HepG2 (cell line): ENCODE measurements at regions of chr1 and their contacts with region 1.

Region 1: DNA sequence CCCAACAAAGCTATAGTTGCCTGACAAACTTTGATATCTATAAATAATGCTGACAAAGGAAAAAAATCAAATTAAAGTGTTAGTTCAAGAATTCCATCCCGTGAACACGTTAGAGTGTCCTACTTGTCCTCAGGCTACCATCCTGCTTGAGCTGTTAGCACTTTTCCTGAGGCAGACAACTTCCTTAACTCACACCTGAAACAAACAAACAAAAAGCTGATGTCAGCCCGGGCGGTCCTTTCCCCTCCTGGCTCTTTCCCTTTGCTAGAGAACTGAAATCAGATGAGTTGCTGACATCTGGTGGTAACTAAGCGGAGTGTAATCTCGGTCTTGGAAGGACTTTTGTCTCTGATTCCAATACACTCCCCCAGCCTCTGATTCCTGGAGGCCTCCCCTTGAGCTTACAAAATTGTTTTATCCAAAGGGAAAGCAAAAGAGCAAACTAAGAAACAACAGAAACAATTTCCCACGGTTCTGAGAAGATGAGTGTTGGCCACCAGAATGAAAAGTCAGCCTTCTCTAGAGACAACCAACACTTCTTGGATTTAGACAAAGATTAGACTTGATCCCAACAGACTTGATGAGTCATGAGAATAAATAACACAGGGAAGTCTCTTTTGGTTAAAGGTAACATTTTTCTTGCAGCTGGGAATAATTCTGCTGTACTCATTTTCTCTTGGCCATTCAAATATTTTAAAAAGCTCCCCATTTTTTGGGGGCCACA is 135.4 kb downstream of the PROX1 start:
- DNase-seq: peak; percentile 86
- ATAC-seq: peak; percentile 91
- H3K4me3 ChIP-seq: no peak overlapping the region
- H3K27ac ChIP-seq: peak overlapping the region; percentile 49
- H3K4me1 ChIP-seq: peaks cover 62% of the 10 kb centered on the region
- H3K27me3 ChIP-seq: no peaks in the 10 kb centered on the region
- CTCF ChIP-seq: peak; percentile 92
- EP300 ChIP-seq: peak in 1 of 2 experiments; percentile 42; a peak in 1 of 4 replicates
- POLR2A ChIP-seq: no peak
- RAD21 ChIP-seq: peak; percentile 94

Region 2: DNA sequence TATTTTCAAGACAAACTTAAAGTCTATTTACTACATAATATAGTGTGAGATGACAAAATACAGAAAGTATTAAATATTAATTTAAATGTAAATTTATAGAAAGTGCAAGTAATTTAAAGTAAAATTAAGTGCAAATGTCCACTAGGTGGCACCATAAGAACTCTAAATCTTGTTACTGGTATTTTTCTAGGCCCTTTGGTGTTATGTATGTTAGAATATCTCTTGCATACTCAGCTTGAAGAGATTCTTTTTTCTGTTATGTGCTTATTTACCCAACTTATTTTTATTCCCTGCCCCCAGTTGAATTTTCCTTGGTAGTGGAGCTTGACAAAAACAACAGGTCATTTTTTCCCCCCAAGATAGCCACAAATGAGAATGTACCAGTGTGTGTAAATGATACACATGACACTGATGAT is 1000.7 kb before region 1 on chr1:
- CTCF ChIA-PET with region 1: no interaction called
- POLR2A ChIA-PET with region 1: no interaction called
- in situ Hi-C with region 1: loop called (anchors 10 kb)
- intact Hi-C with region 1: loop called (anchors 5 kb)
- DNase-seq: peak; percentile 48
- ATAC-seq: no peak
- H3K4me3 ChIP-seq: no peak overlapping the region
- H3K27ac ChIP-seq: no peak overlapping the region
- H3K4me1 ChIP-seq: peaks cover 19% of the 10 kb centered on the region
- H3K27me3 ChIP-seq: no peaks in the 10 kb centered on the region
- CTCF ChIP-seq: peak; percentile 51
- EP300 ChIP-seq: no peak
- POLR2A ChIP-seq: no peak
- RAD21 ChIP-seq: no peak

Region 3: GRCh38 chr1:213564215-213564659 is 559.0 kb before region 1 on chr1:
- CTCF ChIA-PET with region 1: no interaction called
- POLR2A ChIA-PET with region 1: no interaction called
- in situ Hi-C with region 1: loop called (anchors 10 kb)
- intact Hi-C with region 1: loop called (anchors 1 kb)
- DNase-seq: peak; percentile 79
- ATAC-seq: peak; percentile 71
- H3K4me3 ChIP-seq: no peak overlapping the region
- H3K27ac ChIP-seq: peak overlapping the region; percentile 38
- H3K4me1 ChIP-seq: peaks cover 30% of the 10 kb centered on the region
- H3K27me3 ChIP-seq: no peaks in the 10 kb centered on the region
- CTCF ChIP-seq: peak; percentile 62
- EP300 ChIP-seq: peak in 1 of 2 experiments; percentile 31; a peak in 1 of 4 replicates
- POLR2A ChIP-seq: no peak
- RAD21 ChIP-seq: peak; percentile 77

Region 4: GRCh38 chr1:214002472-214002871 is 120.8 kb before region 1 on chr1:
- CTCF ChIA-PET with region 1: interaction called, 3 read pairs
- POLR2A ChIA-PET with region 1: interaction called, 3 read pairs
- in situ Hi-C with region 1: loop called (anchors 25 kb)
- intact Hi-C with region 1: loop called (anchors 5 kb)
- DNase-seq: peak; percentile 78
- ATAC-seq: peak; percentile 72
- H3K4me3 ChIP-seq: no peak overlapping the region
- H3K27ac ChIP-seq: peak overlapping the region; percentile 50
- H3K4me1 ChIP-seq: peaks cover 83% of the 10 kb centered on the region
- H3K27me3 ChIP-seq: no peaks in the 10 kb centered on the region
- CTCF ChIP-seq: no peak
- EP300 ChIP-seq: peak in 1 of 2 experiments; percentile 78; a peak in 2 of 4 replicates
- POLR2A ChIP-seq: no peak
- RAD21 ChIP-seq: no peak

Region 5: DNA sequence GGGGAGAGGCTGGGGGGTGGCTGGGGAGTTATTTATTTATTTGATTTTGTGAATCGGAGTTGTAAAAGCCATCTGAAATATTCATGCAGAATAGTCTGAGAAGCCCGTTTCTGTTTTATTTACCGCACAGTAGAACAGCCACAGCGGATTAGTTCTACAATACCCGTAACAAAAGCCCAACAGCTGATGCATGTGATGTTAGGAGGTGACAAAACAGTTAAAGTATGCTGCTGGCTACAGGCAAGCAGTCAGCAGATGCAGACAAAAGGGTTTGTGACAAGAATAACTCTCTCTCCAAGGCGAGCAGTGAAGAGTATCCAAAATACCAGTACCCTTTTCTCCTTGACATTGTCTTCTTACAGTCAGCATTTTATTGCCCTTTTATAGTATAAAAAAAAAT is 93.4 kb before region 1 on chr1:
- CTCF ChIA-PET with region 1: interaction called, 3 read pairs
- POLR2A ChIA-PET with region 1: interaction called, 18 read pairs
- in situ Hi-C with region 1: loop called (anchors 25 kb)
- intact Hi-C with region 1: loop called (anchors 2 kb)
- DNase-seq: no peak
- ATAC-seq: no peak
- H3K4me3 ChIP-seq: no peak overlapping the region
- H3K27ac ChIP-seq: peak overlapping the region; percentile 85
- H3K4me1 ChIP-seq: peaks cover 81% of the 10 kb centered on the region
- H3K27me3 ChIP-seq: no peaks in the 10 kb centered on the region
- CTCF ChIP-seq: no peak
- EP300 ChIP-seq: no peak
- POLR2A ChIP-seq: no peak
- RAD21 ChIP-seq: no peak

Region 6: GRCh38 chr1:214050513-214051401 is 72.5 kb before region 1 on chr1:
- CTCF ChIA-PET with region 1: no interaction called
- POLR2A ChIA-PET with region 1: interaction called, 38 read pairs
- in situ Hi-C with region 1: no loop called
- intact Hi-C with region 1: loop called (anchors 2 kb)
- DNase-seq: peak; percentile 99
- ATAC-seq: peak; percentile 91
- H3K4me3 ChIP-seq: peak overlapping the region in 2 of 3 experiments; percentile 4 to 32; a peak in 3 of 6 replicates
- H3K27ac ChIP-seq: peak overlapping the region; percentile 91
- H3K4me1 ChIP-seq: peaks cover 73% of the 10 kb centered on the region
- H3K27me3 ChIP-seq: no peaks in the 10 kb centered on the region
- CTCF ChIP-seq: no peak
- EP300 ChIP-seq: peak; percentile 66 to 96
- POLR2A ChIP-seq: peak in 1 of 2 experiments; percentile 44; a peak in 2 of 4 replicates
- RAD21 ChIP-seq: no peak; the same call in none of the 2 replicates

Region 7: GRCh38 chr1:214111796-214112195 is 11.4 kb before region 1 on chr1:
- CTCF ChIA-PET with region 1: no interaction called
- POLR2A ChIA-PET with region 1: no interaction called
- in situ Hi-C with region 1: no loop called
- intact Hi-C with region 1: no loop called
- DNase-seq: no peak
- ATAC-seq: no peak
- H3K4me3 ChIP-seq: no peak overlapping the region
- H3K27ac ChIP-seq: no peak overlapping the region
- H3K4me1 ChIP-seq: peaks cover 19% of the 10 kb centered on the region
- H3K27me3 ChIP-seq: no peaks in the 10 kb centered on the region
- CTCF ChIP-seq: no peak
- EP300 ChIP-seq: no peak
- POLR2A ChIP-seq: no peak
- RAD21 ChIP-seq: no peak